Gastrocnemius medialis (tissue), 4 donors: ENCODE measurements at regions of chr3 and their contacts with region 1.

Region 1: DNA sequence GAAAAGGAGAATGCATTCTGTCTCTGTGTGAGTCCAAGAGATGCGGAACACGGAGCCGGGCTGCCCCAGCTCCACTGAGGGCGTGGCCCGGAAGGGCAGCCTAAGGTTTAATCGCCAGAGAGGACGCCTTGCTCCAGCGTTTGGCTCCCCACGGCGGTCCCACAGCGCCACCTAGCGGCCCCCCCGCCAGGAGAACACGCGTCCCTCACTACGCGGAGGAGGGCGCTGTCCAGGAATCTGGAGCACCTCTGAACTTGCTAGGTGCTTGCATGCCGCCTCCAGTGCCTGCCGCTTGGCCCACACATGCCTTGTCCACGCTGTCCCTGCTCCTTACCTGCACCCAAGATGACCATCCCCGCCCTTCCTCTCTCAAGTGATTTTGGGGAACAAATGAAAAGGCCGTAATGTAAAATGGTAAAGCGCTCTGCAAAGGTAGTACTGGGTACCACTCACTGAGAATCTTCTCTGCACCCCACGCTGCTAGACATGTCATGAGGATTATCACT is 14.4 kb upstream of the MRPS22 start:
- DNase-seq: peak; percentile 51 to 73
- ATAC-seq: peak; percentile 85 to 97
- H3K4me3 ChIP-seq: peak overlapping the region in 3 of 4 donors; percentile 25 to 47 (median 28)
- H3K27ac ChIP-seq: no peak overlapping the region
- H3K4me1 ChIP-seq: no peaks in the 10 kb centered on the region
- H3K27me3 ChIP-seq: peaks cover 0 to 7% (median 0%) of the 10 kb centered on the region in 3 donors
- CTCF ChIP-seq: peak; percentile 91 to 99 (median 94)
- POLR2A ChIP-seq: no peak

Region 2: DNA sequence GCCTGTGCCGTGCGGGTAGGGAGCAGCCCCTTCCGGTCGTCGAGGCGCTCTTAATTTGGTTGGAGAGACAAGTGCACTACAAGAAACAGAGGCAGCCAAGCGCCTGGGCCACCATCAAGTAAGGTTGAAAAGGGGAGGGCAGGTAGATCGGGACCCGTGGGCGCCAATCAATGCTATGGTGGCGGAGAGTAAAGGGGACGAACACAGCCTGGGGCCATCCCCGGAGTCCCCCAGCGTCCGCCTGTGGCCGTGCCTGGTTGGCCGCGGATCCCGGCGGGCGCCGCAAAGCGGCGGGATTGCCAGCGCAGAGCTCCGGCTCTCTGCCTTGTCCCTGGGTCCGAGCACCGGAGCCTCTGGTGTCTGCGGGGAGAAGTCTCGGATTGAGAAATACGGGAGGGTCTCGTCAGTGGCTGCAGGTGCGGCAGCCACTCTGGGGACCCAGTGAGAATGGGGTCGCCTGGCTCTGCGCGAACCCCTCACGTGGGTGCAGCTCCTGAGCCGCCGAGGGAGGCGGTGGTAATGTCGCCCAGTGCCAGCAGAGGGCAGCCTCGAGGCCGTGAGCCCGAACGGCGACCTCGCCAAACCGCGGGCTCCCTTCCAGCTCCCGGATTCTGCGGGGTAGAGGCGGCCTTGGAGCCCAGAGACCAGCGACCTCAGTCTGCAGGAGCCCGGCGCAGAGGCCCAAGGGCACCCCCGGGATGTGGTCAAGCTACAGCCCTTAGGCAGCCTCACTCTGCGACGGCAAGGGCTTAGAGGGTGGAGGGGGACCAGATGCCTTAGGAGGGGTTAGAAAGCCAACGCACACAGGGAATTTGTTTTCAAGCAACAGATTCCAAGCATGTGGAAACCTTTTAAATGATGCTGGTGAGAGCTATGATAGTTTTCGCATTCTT is 393.3 kb before region 1 on chr3:
- in situ Hi-C with region 1: loop called (anchors 10 to 25 kb)
- intact Hi-C with region 1: loop called (anchors 5 kb)
- DNase-seq: peak; percentile 34 to 55
- ATAC-seq: peak; percentile 67 to 68
- H3K4me3 ChIP-seq: peak overlapping the region; percentile 32 to 70 (median 44)
- H3K27ac ChIP-seq: no peak overlapping the region
- H3K4me1 ChIP-seq: peaks cover 28 to 34% of the 10 kb centered on the region in 2 donors
- H3K27me3 ChIP-seq: peaks cover 50 to 56% (median 51%) of the 10 kb centered on the region in 3 donors
- CTCF ChIP-seq: peak; percentile 59 to 95 (median 88)
- POLR2A ChIP-seq: no peak

Region 3: GRCh38 chr3:138950006-138950644 is 379.3 kb before region 1 on chr3:
- in situ Hi-C with region 1: loop called in 3 of 4 experiments (anchors 25 kb)
- intact Hi-C with region 1: loop called (anchors 5 kb)
- DNase-seq: no peak
- ATAC-seq: peak; percentile 10 to 22
- H3K4me3 ChIP-seq: peak overlapping the region; percentile 40 to 62 (median 42)
- H3K27ac ChIP-seq: no peak overlapping the region
- H3K4me1 ChIP-seq: peaks cover 11 to 22% of the 10 kb centered on the region in 2 donors
- H3K27me3 ChIP-seq: peaks cover 76 to 84% (median 78%) of the 10 kb centered on the region in 3 donors
- CTCF ChIP-seq: no peak
- POLR2A ChIP-seq: no peak

Region 4: DNA sequence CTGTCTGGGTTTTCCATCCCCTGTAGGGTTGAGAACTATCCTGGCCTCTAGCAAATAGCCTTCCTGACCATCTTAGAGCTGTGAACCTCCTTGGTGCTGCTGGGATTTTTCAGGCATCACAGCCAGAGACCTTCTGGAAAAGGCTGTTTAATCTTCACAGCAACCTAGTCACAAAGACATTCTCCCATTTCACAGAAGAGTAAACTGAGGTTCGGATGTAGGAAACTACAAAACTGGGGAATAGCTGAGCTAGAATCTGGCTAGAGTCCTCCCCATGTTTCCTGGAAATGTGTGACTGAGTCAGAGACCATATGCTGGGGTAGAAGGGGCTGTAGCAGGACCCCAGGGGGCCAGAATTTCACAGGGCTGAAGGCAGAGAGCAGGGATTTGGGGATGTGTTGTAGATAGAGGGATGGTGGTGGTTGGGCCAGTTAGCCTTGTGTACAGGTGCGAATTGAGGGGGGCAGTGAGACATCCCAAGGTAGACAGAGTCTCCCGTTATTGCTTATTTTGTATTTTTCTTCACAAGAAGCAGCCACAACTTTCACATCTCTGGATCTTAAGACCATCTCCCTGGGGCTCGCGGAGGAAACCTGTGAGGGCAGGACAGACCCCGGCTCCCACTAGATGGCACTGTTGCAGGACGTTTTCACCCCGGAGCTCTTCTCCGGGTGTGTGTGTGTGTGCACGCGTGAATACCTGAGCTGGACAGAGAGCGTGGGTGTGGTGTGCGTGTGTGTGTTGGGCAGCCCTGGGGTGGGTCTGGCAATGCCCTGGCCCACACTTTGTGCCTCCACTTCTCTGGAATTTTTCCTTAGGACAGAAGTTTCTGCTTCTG is 217.8 kb before region 1 on chr3:
- in situ Hi-C with region 1: loop called (anchors 5 to 25 kb)
- intact Hi-C with region 1: no loop called
- DNase-seq: peak; percentile 15 to 25
- ATAC-seq: peak in 1 of 2 donors; percentile 60
- H3K4me3 ChIP-seq: no peak overlapping the region
- H3K27ac ChIP-seq: no peak overlapping the region
- H3K4me1 ChIP-seq: no peaks in the 10 kb centered on the region
- H3K27me3 ChIP-seq: no peaks in the 10 kb centered on the region
- CTCF ChIP-seq: peak; percentile 38 to 73 (median 63)
- POLR2A ChIP-seq: no peak

Region 5: GRCh38 chr3:139267300-139268246 is 61.8 kb before region 1 on chr3:
- in situ Hi-C with region 1: no loop called
- intact Hi-C with region 1: no loop called
- DNase-seq: no peak
- ATAC-seq: peak in 1 of 2 donors; percentile 58
- H3K4me3 ChIP-seq: no peak overlapping the region
- H3K27ac ChIP-seq: no peak overlapping the region
- H3K4me1 ChIP-seq: no peaks in the 10 kb centered on the region
- H3K27me3 ChIP-seq: no peaks in the 10 kb centered on the region
- CTCF ChIP-seq: no peak
- POLR2A ChIP-seq: no peak

Region 6: DNA sequence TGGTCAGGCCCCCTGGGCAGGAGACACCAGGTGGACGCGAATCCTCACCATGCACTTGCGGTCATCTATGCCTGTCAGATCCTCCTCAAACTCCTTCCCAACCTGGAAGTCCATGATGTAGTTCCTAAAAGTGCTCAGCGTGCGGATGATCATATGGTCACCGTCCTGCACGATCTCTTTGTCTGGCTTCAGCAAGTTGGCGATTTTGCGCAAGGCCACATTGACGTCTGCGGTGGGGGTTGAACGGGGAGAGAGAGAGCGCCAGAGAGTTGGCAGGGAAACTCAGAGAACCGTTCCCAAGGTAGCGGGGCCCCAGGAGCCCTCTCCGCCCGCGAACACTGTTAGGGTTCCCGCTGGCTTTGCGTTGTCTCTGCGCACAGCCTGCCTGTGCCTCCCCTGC is 209.3 kb after region 1 on chr3:
- in situ Hi-C with region 1: no loop called
- intact Hi-C with region 1: no loop called
- DNase-seq: no peak
- ATAC-seq: peak in 1 of 2 donors; percentile 31
- H3K4me3 ChIP-seq: peak overlapping the region; percentile 56 to 78 (median 66)
- H3K27ac ChIP-seq: peak overlapping the region in 1 of 4 donors; percentile 49
- H3K4me1 ChIP-seq: peaks cover 8 to 11% of the 10 kb centered on the region in 2 donors
- H3K27me3 ChIP-seq: no peaks in the 10 kb centered on the region
- CTCF ChIP-seq: no peak
- POLR2A ChIP-seq: no peak